Activated B cell treated with CpG ODN at 0.5 μM for 24 hours (primary cell): ENCODE measurements at regions of chr10 and their contacts with region 1.

Region 1: GRCh38 chr10:27241652-27242472 is 1.3 kb upstream of the ACBD5 start:
- DNase-seq: peak; percentile 87
- ATAC-seq: peak; percentile 67
- H3K4me3 Mint-ChIP-seq: peak overlapping the region; percentile 98
- H3K27ac Mint-ChIP-seq: peak overlapping the region; percentile 99
- H3K4me1 Mint-ChIP-seq: peaks cover 45% of the 10 kb centered on the region
- H3K27me3 Mint-ChIP-seq: no peaks in the 10 kb centered on the region
- CTCF ChIP-seq: no peak

Region 2: GRCh38 chr10:26574783-26575182 is 667.1 kb before region 1 on chr10:
- CTCF ChIA-PET with region 1: no interaction called
- POLR2A ChIA-PET with region 1: no interaction called
- intact Hi-C with region 1: loop called (anchors 5 kb)
- DNase-seq: no peak
- ATAC-seq: peak; percentile 78
- H3K4me3 Mint-ChIP-seq: peak overlapping the region; percentile 51
- H3K27ac Mint-ChIP-seq: peak overlapping the region; percentile 84
- H3K4me1 Mint-ChIP-seq: peaks cover 29% of the 10 kb centered on the region
- H3K27me3 Mint-ChIP-seq: no peaks in the 10 kb centered on the region
- CTCF ChIP-seq: no peak

Region 3: DNA sequence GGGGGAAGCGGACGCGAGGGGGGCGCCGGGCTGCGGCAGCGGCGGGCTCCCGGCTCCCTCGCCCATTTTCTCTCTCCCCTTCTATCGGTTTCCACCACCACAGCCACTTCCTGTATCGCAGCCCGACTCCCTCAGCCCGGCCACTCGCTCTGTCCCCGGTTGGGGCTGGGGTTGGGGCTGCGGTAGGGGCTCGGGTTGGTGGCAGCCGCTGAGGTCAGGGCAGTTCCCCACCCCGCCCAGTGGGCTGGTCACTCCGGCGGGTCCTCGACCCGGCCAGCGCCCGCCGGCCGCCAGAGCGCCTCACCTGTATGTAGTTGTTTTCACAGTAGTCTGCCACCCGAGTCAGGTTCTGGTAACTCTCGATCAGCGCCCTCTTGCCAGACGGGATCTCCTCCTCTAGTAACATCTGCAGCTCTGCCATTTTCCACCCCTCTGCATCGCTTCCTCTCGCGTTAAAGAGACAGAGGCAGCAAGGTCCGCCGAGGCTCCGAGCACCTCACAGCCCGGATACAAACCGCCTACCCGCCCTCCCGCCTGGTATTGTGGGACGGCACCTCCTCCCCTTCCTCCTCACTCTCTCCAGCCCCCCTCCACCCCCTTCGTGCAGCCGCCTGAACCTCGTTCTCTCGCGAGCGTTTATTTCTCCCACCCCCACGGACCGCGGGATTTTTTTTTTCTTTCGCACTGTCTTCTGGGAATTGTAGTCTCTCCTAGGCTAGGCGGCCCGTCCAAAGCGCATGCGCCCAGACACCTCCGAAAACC is 381.2 kb before region 1 on chr10 and contains the start of gene ABI1:
- CTCF ChIA-PET with region 1: no interaction called
- POLR2A ChIA-PET with region 1: interaction called, 5 read pairs
- intact Hi-C with region 1: loop called (anchors 1 kb)
- DNase-seq: peak; percentile 87
- ATAC-seq: peak; percentile 90
- H3K4me3 Mint-ChIP-seq: peak within 1 kb of the TSS; percentile 98
- H3K27ac Mint-ChIP-seq: peak within 1 kb of the TSS; percentile 98
- H3K4me1 Mint-ChIP-seq: peaks cover 43% of the 10 kb centered on the region
- H3K27me3 Mint-ChIP-seq: peaks cover 3% of the 10 kb centered on the region
- CTCF ChIP-seq: no peak
- total RNA-seq, gene ABI1: 76.7 and 83.5 TPM in 2 replicates

Region 4: GRCh38 chr10:26903431-26904217 is 338.2 kb before region 1 on chr10:
- CTCF ChIA-PET with region 1: no interaction called
- POLR2A ChIA-PET with region 1: no interaction called
- intact Hi-C with region 1: no loop called
- DNase-seq: no peak
- ATAC-seq: no peak
- H3K4me3 Mint-ChIP-seq: no peak overlapping the region
- H3K27ac Mint-ChIP-seq: no peak overlapping the region
- H3K4me1 Mint-ChIP-seq: no peaks in the 10 kb centered on the region
- H3K27me3 Mint-ChIP-seq: peaks cover 8% of the 10 kb centered on the region
- CTCF ChIP-seq: no peak

Region 5: DNA sequence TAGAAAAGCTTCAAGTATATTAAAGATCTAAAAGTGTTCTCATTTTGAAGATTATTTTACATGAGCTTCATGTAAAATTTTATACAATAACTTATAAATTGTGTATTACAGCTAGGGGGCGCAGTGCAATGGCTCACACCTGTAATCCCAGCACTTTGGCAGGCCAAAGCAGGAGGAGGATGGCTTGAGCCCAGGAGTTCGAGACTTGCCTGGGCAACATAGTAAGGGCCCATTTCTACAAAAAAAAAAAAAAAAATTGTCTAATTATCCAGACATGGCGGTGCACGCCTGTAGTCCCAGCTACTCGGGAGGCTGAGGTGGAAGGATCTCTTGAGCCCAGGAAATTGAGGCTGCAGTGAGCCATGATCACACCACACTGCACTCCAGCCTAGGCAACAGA is 17.9 kb before region 1 on chr10:
- CTCF ChIA-PET with region 1: interaction called, 5 read pairs
- POLR2A ChIA-PET with region 1: interaction called, 7 read pairs
- intact Hi-C with region 1: loop called (anchors 1 kb)
- DNase-seq: no peak
- ATAC-seq: peak; percentile 60
- H3K4me3 Mint-ChIP-seq: no peak overlapping the region
- H3K27ac Mint-ChIP-seq: peak overlapping the region; percentile 20
- H3K4me1 Mint-ChIP-seq: no peaks in the 10 kb centered on the region
- H3K27me3 Mint-ChIP-seq: no peaks in the 10 kb centered on the region
- CTCF ChIP-seq: peak; percentile 84

Region 6: GRCh38 chr10:27258838-27259812 is 17.3 kb after region 1 on chr10:
- CTCF ChIA-PET with region 1: no interaction called
- POLR2A ChIA-PET with region 1: interaction called, 10 read pairs
- intact Hi-C with region 1: loop called (anchors 2 kb)
- DNase-seq: peak; percentile 29
- ATAC-seq: peak; percentile 62
- H3K4me3 Mint-ChIP-seq: peak overlapping the region; percentile 82
- H3K27ac Mint-ChIP-seq: no peak overlapping the region
- H3K4me1 Mint-ChIP-seq: peaks cover 20% of the 10 kb centered on the region
- H3K27me3 Mint-ChIP-seq: peaks cover 42% of the 10 kb centered on the region
- CTCF ChIP-seq: no peak

Region 7: DNA sequence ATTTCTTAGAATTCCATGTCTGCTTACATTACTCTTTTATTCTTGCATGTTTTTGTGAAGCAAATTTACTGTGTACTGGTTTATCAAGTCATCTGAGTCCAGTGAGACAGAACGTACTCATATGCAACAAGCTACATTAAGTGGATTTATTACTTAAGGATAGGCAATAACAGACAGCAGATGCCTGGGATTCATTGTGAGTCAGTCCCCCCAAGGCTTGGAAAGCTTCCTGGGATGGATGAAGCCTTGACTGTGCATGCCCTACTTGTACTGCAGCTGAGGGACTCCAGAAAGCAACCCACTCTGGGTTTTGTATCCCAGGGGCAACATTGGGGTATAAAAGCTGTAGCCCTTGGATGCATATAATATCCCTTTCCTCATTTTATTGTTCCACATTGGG is 148.8 kb after region 1 on chr10:
- CTCF ChIA-PET with region 1: no interaction called
- POLR2A ChIA-PET with region 1: no interaction called
- intact Hi-C with region 1: no loop called
- DNase-seq: no peak
- ATAC-seq: no peak
- H3K4me3 Mint-ChIP-seq: no peak overlapping the region
- H3K27ac Mint-ChIP-seq: no peak overlapping the region
- H3K4me1 Mint-ChIP-seq: no peaks in the 10 kb centered on the region
- H3K27me3 Mint-ChIP-seq: peaks cover 15% of the 10 kb centered on the region
- CTCF ChIP-seq: no peak

Region 8: GRCh38 chr10:27713927-27714326 is 472.1 kb after region 1 on chr10:
- CTCF ChIA-PET with region 1: no interaction called
- POLR2A ChIA-PET with region 1: no interaction called
- intact Hi-C with region 1: no loop called
- DNase-seq: no peak
- ATAC-seq: no peak
- H3K4me3 Mint-ChIP-seq: no peak overlapping the region
- H3K27ac Mint-ChIP-seq: no peak overlapping the region
- H3K4me1 Mint-ChIP-seq: no peaks in the 10 kb centered on the region
- H3K27me3 Mint-ChIP-seq: peaks cover 15% of the 10 kb centered on the region
- CTCF ChIP-seq: no peak

Region 9: GRCh38 chr10:28302638-28303488 is 1061.0 kb after region 1 on chr10 and contains the start of gene MPP7:
- CTCF ChIA-PET with region 1: no interaction called
- POLR2A ChIA-PET with region 1: no interaction called
- intact Hi-C with region 1: loop called (anchors 2 kb)
- DNase-seq: peak; percentile 96
- ATAC-seq: peak; percentile 91
- H3K4me3 Mint-ChIP-seq: peak within 1 kb of the TSS; percentile 91
- H3K27ac Mint-ChIP-seq: peak within 1 kb of the TSS; percentile 73
- H3K4me1 Mint-ChIP-seq: peaks cover 30% of the 10 kb centered on the region
- H3K27me3 Mint-ChIP-seq: peaks cover 35% of the 10 kb centered on the region
- CTCF ChIP-seq: no peak
- total RNA-seq, gene MPP7: 6.2 and 8.3 TPM in 2 replicates